K562 (cell line): ENCODE measurements at regions of chr6 and their contacts with region 1.

Region 1: GRCh38 chr6:118252474-118252873 is 295.6 kb upstream of the PLN start:
- DNase-seq: peak in 1 of 4 experiments; percentile 8
- ATAC-seq: peak; percentile 60
- H3K4me3 ChIP-seq: no peak overlapping the region
- H3K27ac ChIP-seq: no peak overlapping the region
- H3K4me1 ChIP-seq: no peaks in the 10 kb centered on the region
- H3K27me3 ChIP-seq: no peaks in the 10 kb centered on the region; a peak in 2 of 5 replicates
- CTCF ChIP-seq: peak; percentile 7 to 26 (median 12); a peak in 2 of 6 replicates
- EP300 ChIP-seq: no peak
- POLR2A ChIP-seq: no peak
- RAD21 ChIP-seq: peak in 1 of 2 experiments; percentile 26; a peak in 1 of 4 replicates

Region 2: GRCh38 chr6:117985916-117986315 is 266.6 kb before region 1 on chr6:
- CTCF ChIA-PET with region 1: no interaction called
- POLR2A ChIA-PET with region 1: no interaction called
- in situ Hi-C with region 1: no loop called
- intact Hi-C with region 1: loop called (anchors 10 kb)
- DNase-seq: no peak
- ATAC-seq: no peak
- H3K4me3 ChIP-seq: no peak overlapping the region
- H3K27ac ChIP-seq: no peak overlapping the region
- H3K4me1 ChIP-seq: no peaks in the 10 kb centered on the region
- H3K27me3 ChIP-seq: no peaks in the 10 kb centered on the region
- CTCF ChIP-seq: no peak
- EP300 ChIP-seq: no peak
- POLR2A ChIP-seq: no peak
- RAD21 ChIP-seq: no peak